ENCODE measurements at regions of chr2 and their contacts with region 1.

Region 1: DNA sequence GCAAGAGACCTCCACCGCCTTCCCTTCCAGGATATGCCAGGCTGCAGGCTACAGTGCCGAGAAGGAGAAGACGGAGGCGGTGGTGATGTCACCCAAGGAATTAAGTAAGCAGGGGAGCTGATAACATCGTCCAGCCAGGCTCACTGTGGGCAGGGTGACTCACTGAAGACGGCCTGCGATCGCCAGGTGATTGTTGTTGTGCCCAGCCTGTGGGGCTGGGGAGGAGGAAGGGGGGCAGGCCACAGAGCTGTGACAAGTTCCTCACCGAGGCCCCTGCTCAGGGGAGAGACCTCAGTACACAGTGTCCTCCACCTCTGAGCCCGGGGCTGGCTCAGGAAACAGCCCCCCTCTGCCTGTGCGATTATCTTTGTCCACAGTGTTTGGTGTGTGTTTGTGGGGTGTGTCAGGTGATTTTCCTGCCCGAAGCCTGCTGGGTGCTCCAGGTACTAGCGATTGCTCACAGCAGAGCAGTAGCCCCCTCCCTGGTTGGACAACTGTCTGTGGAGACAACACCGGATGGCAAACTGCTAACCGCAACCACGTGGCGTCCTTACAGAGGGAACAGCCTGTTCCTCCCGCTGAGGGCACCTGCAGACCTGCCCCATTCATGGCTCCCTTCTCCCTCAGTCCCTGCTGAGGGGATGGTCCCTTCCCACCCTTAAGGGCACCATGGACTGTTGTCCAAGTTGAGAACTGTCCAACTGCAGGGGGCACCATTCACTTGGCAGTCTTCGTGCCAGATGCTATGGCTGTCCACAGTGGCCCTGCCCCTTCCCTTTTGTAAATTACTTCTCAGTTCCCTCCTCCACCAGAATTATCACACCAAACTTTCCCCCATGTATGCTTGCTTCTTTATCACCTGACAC is 95.1 kb downstream of the ZFP36L2 start:
- DNase-seq: peak; percentile 90
- ATAC-seq: peak; percentile 47
- H3K4me3 Mint-ChIP-seq: peak overlapping the region; percentile 8
- H3K27ac Mint-ChIP-seq: peak overlapping the region; percentile 70
- H3K4me1 Mint-ChIP-seq: peaks cover 88% of the 10 kb centered on the region
- H3K27me3 Mint-ChIP-seq: no peaks in the 10 kb centered on the region

Region 2: DNA sequence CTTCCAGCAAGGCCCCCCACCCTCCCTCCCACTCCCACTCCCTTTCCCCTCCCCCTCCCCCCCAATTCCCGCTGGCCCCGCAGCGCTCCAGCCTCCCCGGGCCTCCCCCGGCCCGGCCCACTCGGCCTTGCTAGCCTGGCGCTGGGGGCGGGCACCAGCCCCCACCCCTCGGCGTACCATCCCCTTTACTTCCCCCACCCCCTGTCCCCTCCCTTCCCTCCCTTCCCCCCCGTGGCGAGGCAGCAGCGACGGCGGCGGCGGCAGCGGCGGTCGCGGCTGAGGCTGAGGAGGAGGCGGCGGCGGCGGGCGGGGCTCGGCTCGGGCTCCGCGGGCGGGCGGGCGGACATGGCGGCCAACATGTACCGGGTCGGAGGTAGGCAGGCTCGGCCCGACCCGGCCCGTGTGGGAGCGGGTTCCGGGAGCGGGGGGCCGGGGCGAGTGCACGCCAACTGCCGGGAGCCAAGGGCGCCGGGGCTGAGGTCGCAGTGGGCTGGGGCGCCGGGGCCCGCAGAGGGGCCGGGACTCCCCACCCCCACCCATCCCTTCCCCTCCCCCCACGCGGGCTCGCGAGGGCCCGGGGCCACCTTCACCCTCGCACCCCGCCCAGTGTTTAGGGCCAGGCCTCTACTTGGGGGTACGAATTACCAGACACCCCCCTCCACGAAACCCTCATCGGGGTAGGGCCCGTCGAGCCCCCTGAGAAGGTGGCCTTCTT is 562.7 kb before region 1 on chr2 and contains the start of gene MTA3:
- CTCF ChIA-PET with region 1: no interaction called
- POLR2A ChIA-PET with region 1: no interaction called
- intact Hi-C with region 1: no loop called
- DNase-seq: peak; percentile 81
- ATAC-seq: peak; percentile 81
- H3K4me3 Mint-ChIP-seq: peak within 1 kb of the TSS; percentile 86
- H3K27ac Mint-ChIP-seq: peak within 1 kb of the TSS; percentile 91
- H3K4me1 Mint-ChIP-seq: peaks cover 32% of the 10 kb centered on the region
- H3K27me3 Mint-ChIP-seq: no peaks in the 10 kb centered on the region
- total RNA-seq, gene MTA3: 45.0 to 58.6 TPM

Region 3: DNA sequence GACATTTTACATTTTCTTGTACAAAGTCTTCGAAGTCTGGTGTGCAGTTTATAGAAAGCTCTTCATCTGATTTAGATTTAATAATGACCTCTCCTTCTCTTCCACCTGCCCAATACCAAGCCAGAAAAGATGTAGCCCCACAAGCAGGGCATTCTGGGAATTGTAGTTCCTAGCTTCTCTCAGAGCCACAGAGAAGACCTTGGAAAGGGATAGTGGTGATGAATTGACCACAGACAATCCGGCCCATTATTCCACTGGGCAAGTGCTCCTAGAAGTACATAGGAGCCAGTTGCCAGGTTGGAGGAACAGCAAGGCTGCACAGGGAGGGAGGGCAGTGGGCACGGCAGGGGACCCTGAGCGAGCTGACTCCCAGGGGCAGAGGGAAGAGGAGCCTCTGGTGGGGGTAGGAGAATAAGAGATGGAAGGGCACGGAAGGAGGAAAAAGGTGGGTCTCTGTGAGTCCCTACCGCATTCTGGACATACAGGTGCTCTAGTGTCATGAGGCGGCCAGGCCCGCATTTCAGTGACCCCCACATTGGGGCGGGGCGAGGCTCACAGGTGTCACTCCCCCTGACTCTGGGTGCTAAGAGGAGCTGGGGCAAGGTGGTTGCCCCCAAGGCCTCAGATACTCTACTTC is 186.4 kb before region 1 on chr2:
- CTCF ChIA-PET with region 1: interaction called, 4 read pairs
- POLR2A ChIA-PET with region 1: no interaction called
- intact Hi-C with region 1: loop called (anchors 1 to 5 kb)
- DNase-seq: no peak
- ATAC-seq: no peak
- H3K4me3 Mint-ChIP-seq: no peak overlapping the region
- H3K27ac Mint-ChIP-seq: no peak overlapping the region
- H3K4me1 Mint-ChIP-seq: peaks cover 3% of the 10 kb centered on the region
- H3K27me3 Mint-ChIP-seq: no peaks in the 10 kb centered on the region

Region 4: DNA sequence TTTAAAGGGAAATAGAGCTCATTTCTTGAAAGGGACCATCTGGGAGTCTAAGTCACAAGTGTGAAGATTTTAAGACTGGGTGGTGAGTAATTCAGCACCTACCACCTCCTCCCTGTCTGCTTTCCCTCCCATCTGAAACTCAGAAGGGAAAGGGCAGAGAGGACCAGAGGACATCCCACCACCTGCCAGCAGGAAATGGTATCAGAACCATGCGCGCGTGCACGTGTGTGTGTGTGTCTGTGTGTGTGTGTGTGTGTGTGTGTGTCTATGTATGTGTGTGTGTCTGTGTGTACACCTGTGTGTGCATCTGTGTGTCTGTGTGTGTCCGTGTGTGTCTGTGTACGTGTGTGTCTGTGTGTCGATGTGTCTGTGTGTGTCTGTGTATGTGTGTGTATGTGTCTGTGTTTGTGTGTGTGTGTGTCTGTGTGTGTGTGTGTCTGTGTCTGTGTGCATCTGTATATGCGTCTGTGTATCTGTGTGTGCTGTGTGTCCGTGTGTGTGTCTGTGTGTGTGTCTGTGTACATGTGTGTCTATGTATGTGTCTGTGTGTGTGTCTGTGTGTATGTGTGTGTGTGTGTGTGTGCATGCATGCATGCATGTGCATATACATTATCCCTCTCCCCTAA is 18.3 kb after region 1 on chr2:
- CTCF ChIA-PET with region 1: interaction called, 7 read pairs
- POLR2A ChIA-PET with region 1: interaction called, 4 read pairs
- intact Hi-C with region 1: loop called in 1 of 2 experiments (anchors 2 kb)
- DNase-seq: peak; percentile 86
- ATAC-seq: peak; percentile 97
- H3K4me3 Mint-ChIP-seq: peak overlapping the region; percentile 49
- H3K27ac Mint-ChIP-seq: peak overlapping the region; percentile 97
- H3K4me1 Mint-ChIP-seq: peaks cover 67% of the 10 kb centered on the region
- H3K27me3 Mint-ChIP-seq: no peaks in the 10 kb centered on the region

Region 5: DNA sequence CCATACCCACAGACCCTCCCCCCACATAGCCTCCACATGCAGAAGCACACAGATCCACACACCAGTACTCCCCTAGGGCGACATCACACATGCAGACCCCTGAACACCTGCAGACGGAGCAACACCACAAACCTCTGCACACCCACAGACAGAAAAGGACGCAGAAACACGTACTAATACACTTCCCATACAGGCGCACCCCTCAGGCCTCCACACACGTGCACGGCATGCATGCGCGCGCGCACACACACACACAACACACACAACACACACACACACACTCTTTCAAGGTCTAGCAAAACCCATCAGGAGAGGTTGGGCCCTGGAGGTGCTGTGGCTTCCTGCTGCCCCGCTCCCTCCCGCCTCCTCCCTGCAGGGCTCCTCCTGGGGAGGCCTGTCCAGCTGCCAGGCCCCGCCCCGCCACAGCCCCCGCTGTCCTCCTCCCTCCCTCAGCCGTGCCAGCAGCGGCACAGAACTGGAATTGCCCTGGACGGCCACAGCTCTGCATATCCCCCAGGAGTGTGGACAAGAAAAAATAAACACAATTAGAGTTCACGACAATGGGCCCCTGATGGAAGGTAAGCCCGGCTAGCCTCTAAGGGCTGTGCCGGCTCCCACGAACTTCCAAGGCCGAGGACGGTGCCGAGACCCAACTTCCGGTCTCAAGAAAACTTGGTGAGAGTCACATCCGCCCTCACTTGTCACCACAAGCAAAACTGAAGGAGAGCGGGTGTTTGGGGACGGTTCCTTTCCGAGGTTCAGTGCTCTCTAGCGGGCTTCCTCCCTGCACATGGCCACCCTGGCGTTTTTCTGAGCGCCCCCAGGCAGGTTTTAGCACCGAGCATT is 88.3 kb after region 1 on chr2:
- CTCF ChIA-PET with region 1: interaction called, 32 read pairs
- POLR2A ChIA-PET with region 1: interaction called, 5 read pairs
- intact Hi-C with region 1: loop called (anchors 1 kb)
- DNase-seq: peak; percentile 88
- ATAC-seq: peak; percentile 69
- H3K4me3 Mint-ChIP-seq: peak overlapping the region; percentile 83
- H3K27ac Mint-ChIP-seq: peak overlapping the region; percentile 98
- H3K4me1 Mint-ChIP-seq: peaks cover 46% of the 10 kb centered on the region
- H3K27me3 Mint-ChIP-seq: no peaks in the 10 kb centered on the region

Region 6: DNA sequence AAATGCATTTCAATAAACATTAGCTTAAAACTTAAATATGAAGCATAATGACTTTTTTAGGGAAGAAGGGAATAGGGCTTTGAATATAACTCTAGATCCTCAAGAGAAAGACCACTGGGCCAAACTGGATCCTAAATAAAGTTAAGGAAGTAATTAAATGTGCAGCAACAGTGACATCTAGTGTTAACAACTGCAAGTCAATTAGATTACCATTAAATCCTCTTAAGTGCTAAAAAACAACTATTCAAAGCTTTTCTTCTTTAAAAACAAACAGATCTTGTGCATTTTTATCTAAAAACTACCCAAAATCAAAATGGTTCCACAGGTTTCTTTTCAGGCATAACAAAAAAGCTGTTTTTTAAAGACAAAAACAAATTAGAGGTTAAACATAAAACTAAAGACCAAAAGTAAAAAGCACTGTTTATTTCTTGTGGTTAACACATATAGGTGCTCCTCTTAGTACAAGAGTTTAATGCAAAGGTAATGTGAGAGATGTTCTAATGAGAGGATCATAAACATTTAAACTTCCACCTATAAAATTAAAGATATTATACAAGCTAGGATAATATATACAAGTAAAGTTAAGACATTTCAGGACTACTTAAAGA is 353.2 kb after region 1 on chr2:
- CTCF ChIA-PET with region 1: interaction called, 15 read pairs
- POLR2A ChIA-PET with region 1: no interaction called
- intact Hi-C with region 1: loop called (anchors 1 kb)
- DNase-seq: no peak
- ATAC-seq: peak; percentile 42
- H3K4me3 Mint-ChIP-seq: no peak overlapping the region
- H3K27ac Mint-ChIP-seq: no peak overlapping the region
- H3K4me1 Mint-ChIP-seq: peaks cover 2% of the 10 kb centered on the region
- H3K27me3 Mint-ChIP-seq: no peaks in the 10 kb centered on the region

Region 7: DNA sequence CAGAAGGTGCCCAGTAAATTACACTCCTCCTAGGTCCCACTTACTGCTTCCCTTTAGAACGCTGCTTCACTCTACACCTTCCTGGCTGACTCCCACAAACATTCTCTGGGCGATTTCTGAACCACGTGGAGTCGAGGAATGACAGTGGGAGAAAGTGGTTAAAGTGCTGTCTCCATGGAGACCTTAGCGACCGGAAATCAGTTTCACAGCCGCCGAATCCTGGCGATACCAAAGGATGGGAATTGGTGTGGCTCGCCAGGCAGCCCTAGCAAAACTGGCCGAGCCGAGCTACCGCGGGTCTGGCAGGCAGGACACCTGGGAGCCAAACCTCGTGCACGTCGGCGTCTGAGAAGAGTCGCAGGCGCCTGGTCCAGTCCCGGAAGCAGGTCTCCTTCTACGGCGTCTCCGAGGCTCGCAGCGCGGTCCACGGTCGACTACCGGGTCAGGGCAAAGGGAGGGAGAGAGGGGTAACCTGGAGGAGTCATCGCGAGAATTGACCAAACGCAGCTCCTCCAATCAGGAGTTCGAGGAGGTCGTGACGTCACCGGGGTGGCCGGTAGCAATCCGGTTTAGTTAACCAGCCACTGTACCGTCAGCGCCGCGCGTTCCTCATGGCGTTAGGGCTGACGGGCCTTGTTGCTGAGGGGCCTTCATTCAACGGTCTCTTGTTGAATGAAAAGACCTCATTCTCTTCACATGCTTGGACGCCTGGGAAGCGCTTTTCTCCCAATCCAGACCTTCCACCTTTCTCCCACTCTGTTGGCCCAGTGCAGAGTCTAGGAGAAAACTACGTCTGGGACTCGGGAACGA is 464.6 kb after region 1 on chr2 and contains the start of gene THADA:
- CTCF ChIA-PET with region 1: no interaction called
- POLR2A ChIA-PET with region 1: no interaction called
- intact Hi-C with region 1: loop called (anchors 5 kb)
- DNase-seq: peak; percentile 99
- ATAC-seq: peak; percentile 97
- H3K4me3 Mint-ChIP-seq: peak within 1 kb of the TSS; percentile 89
- H3K27ac Mint-ChIP-seq: peak within 1 kb of the TSS; percentile 98
- H3K4me1 Mint-ChIP-seq: peaks cover 34% of the 10 kb centered on the region
- H3K27me3 Mint-ChIP-seq: peaks cover 2% of the 10 kb centered on the region
- total RNA-seq, gene THADA: 32.5 to 36.6 TPM